SK-N-SH (cell line): ENCODE measurements at regions of chr17 and their contacts with region 1.

Region 1: DNA sequence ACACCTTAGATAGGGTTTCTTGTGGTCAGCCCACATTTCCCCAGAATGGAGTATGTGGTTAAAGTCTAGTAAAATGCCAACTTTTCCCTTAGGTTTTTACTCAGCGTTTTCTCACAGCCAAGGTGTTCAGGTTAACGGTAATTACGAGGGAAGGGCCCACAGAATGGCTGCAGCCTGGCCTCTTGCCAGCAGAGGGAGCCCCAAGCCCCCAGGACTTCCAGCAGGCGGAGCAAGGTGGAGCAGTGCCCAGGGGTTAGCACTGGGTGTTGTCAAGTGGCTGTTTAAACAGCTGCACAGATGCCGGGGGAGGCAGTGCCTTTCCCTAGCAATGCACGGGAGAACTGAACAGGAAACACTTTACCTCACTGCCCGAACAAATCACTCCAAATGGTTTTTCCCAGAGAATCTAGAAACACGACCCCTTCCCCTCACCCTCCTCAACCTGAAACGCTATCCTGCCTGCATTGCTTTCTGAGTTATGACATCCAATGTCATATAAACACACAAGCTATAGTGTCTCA is 6.6 kb downstream of the PHB1 start:
- DNase-seq: peak; percentile 92
- H3K4me3 ChIP-seq: peak overlapping the region in 1 of 2 experiments; percentile 27; a peak in 1 of 4 replicates
- H3K27ac ChIP-seq: no peak overlapping the region
- H3K4me1 ChIP-seq: peaks cover 0 to 4% of the 10 kb centered on the region in 2 experiments; a peak in 1 of 4 replicates
- H3K27me3 ChIP-seq: no peaks in the 10 kb centered on the region
- CTCF ChIP-seq: peak; percentile 100
- EP300 ChIP-seq: no peak
- RAD21 ChIP-seq: peak; percentile 86

Region 2: DNA sequence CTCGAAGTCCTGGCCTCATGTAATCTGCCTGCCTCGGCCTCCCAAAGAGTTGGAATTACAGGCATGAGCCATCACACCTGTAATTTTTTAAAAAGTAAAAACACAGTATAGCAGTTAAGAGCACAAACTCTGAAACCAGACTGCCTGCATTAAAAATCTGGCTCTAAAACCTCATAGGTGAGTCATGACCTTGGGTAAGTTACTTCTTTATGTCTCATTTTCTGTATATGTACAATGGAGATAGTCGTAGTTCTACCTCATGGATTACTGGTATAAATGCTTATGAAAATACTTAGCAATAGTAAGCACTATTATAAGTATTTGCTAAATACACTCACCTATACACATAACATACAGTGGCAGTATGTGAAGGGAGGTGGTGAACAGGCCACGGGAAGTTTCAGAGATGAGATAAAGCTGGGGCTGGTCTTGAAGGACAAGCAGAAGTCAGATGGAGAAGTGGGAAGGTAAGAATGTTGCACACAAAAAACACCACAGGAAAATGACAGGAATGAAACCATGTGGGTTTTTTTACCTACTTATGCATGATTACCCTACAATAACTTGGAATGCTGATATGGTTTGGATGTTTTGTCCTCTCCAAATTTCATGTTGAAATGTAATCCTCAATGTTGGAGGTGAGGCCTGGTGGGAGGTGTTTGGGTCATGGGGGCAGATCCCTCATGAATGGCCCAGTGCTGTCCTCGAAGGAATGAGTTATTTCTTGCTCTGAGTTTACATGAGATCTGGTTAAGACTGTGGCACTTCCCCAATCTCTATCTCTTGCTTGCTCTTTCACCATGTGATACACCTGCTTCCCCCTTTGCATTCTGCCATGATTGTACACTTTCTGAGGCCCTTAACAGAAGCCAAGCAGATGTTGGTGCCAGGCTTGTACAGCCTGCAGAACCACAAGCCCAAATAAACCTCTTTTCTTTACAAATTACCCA is 79.9 kb before region 1 on chr17:
- CTCF ChIA-PET with region 1: interaction called, 10 read pairs
- POLR2A ChIA-PET with region 1: no interaction called
- DNase-seq: no peak
- H3K4me3 ChIP-seq: no peak overlapping the region
- H3K27ac ChIP-seq: no peak overlapping the region
- H3K4me1 ChIP-seq: no peaks in the 10 kb centered on the region
- H3K27me3 ChIP-seq: no peaks in the 10 kb centered on the region
- CTCF ChIP-seq: no peak
- EP300 ChIP-seq: no peak
- RAD21 ChIP-seq: no peak

Region 3: DNA sequence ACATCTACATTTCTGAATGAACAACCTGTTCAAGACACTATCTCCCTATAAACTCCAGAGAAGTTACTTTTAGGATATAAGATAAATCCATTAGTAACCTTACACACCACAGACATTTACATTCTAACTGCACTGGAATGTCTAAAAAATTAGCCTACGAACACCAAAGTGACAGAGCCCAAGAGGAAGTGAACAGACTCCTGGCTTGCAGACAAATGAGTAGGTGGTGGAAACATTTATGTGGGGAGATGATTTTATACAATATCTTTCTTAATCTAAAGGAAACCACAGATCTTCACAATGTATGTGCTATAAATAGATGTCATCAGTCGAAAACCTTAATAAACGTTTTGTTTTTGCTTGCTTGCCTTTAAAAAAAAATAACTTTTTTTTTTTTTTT is 64.8 kb before region 1 on chr17:
- CTCF ChIA-PET with region 1: no interaction called
- POLR2A ChIA-PET with region 1: no interaction called
- DNase-seq: no peak
- H3K4me3 ChIP-seq: no peak overlapping the region
- H3K27ac ChIP-seq: peak overlapping the region in 1 of 2 experiments; percentile 72; a peak in 2 of 4 replicates
- H3K4me1 ChIP-seq: peaks cover 0 to 25% of the 10 kb centered on the region in 2 experiments; a peak in 3 of 4 replicates
- H3K27me3 ChIP-seq: no peaks in the 10 kb centered on the region
- CTCF ChIP-seq: no peak
- EP300 ChIP-seq: peak in 1 of 2 experiments; percentile 41; a peak in 1 of 4 replicates
- RAD21 ChIP-seq: no peak

Region 4: GRCh38 chr17:49425004-49425286 is 16.9 kb after region 1 on chr17:
- CTCF ChIA-PET with region 1: interaction called, 31 read pairs
- POLR2A ChIA-PET with region 1: interaction called, 4 read pairs
- DNase-seq: no peak
- H3K4me3 ChIP-seq: peak overlapping the region in 1 of 2 experiments; percentile 5; a peak in 1 of 4 replicates
- H3K27ac ChIP-seq: peak overlapping the region in 1 of 2 experiments; percentile 35; a peak in 2 of 4 replicates
- H3K4me1 ChIP-seq: no peaks in the 10 kb centered on the region
- H3K27me3 ChIP-seq: peaks cover 15% of the 10 kb centered on the region; the same call in 1 of the 2 replicates
- CTCF ChIP-seq: no peak
- EP300 ChIP-seq: no peak
- RAD21 ChIP-seq: no peak

Region 5: DNA sequence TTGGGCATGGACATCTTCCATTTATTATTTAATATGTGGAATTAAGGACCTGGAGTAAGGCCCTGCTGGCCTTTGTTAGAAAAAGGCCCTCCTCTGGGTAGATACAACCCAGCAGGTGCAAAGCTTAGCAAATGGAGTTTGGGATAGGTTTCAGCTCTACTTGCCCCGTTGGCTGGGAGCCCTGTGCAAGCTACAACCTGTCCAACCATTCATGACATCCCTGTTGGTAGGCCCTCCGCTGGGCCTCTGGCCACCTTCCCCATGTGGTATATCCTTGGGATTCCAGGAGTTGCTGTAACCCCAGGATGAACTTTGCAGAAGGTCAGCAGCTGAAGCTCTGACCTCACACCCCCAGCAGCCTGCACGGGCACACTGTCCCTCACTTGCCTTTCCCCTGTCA is 93.5 kb after region 1 on chr17:
- CTCF ChIA-PET with region 1: interaction called, 42 read pairs
- POLR2A ChIA-PET with region 1: no interaction called
- DNase-seq: no peak
- H3K4me3 ChIP-seq: no peak overlapping the region
- H3K27ac ChIP-seq: no peak overlapping the region
- H3K4me1 ChIP-seq: peaks cover 0 to 33% of the 10 kb centered on the region in 2 experiments; a peak in 2 of 4 replicates
- H3K27me3 ChIP-seq: peaks cover 76% of the 10 kb centered on the region
- CTCF ChIP-seq: no peak
- EP300 ChIP-seq: no peak
- RAD21 ChIP-seq: no peak

Region 6: DNA sequence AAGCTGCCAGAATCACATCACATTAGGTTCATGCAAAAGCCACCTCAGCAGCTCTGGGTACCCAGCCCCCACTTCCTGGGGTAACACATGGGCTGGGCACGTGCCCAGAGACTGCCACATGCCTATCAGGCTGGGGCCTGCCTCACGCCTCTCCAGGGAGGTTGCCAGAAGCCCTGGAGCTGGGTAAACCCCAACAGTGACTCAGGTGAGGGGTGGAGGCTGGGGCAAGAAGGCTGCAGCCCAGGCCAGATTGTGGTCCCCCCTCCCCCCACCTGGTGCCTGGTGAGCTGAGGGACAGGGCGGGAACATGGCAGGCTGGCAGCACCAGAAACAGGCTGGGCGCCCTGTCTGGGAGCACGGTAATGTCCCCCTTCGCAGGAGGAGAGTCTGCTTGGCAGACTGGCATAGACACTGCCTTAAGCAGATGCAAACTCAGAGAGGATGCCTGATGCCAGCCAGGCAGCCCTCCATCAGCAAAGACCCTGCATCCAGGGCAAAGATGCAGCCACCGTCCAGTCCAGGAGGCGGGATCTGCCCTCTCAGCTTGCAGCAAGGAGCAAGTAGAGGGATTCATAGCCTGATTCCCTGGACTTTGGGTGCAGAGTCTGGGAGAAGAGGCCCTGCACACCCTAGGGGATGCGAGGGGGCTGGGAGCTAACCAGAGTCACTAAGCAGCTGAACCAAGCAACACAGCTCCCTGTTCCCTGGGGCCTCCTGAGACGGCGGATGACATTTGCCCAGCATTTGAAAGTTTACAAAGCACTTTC is 115.8 kb after region 1 on chr17:
- CTCF ChIA-PET with region 1: interaction called, 12 read pairs
- POLR2A ChIA-PET with region 1: no interaction called
- DNase-seq: peak; percentile 56
- H3K4me3 ChIP-seq: no peak overlapping the region
- H3K27ac ChIP-seq: peak overlapping the region in 1 of 2 experiments; percentile 66; a peak in 1 of 4 replicates
- H3K4me1 ChIP-seq: peaks cover 0 to 63% of the 10 kb centered on the region in 2 experiments; a peak in 1 of 4 replicates
- H3K27me3 ChIP-seq: peaks cover 8% of the 10 kb centered on the region; the same call in 1 of the 2 replicates
- CTCF ChIP-seq: no peak
- EP300 ChIP-seq: no peak
- RAD21 ChIP-seq: no peak

Region 7: GRCh38 chr17:49694847-49695683 is 287.0 kb after region 1 on chr17:
- CTCF ChIA-PET with region 1: interaction called, 11 read pairs
- POLR2A ChIA-PET with region 1: no interaction called
- DNase-seq: peak; percentile 82
- H3K4me3 ChIP-seq: no peak overlapping the region; a peak in 1 of 4 replicates
- H3K27ac ChIP-seq: no peak overlapping the region
- H3K4me1 ChIP-seq: peaks cover 0 to 2% of the 10 kb centered on the region in 2 experiments; a peak in 1 of 4 replicates
- H3K27me3 ChIP-seq: no peaks in the 10 kb centered on the region
- CTCF ChIP-seq: peak; percentile 100
- EP300 ChIP-seq: no peak
- RAD21 ChIP-seq: peak; percentile 98